ENCODE measurements at regions of chr17 and their contacts with region 1.

Region 1: GRCh38 chr17:28812091-28812747 is 30.4 kb downstream of the FAM222B start:
- DNase-seq: peak; percentile 98
- ATAC-seq: peak; percentile 100
- H3K4me3 Mint-ChIP-seq: peak overlapping the region; percentile 90
- H3K27ac Mint-ChIP-seq: peak overlapping the region; percentile 91
- H3K4me1 Mint-ChIP-seq: peaks cover 43% of the 10 kb centered on the region
- H3K27me3 Mint-ChIP-seq: no peaks in the 10 kb centered on the region
- CTCF ChIP-seq: no peak

Region 2: DNA sequence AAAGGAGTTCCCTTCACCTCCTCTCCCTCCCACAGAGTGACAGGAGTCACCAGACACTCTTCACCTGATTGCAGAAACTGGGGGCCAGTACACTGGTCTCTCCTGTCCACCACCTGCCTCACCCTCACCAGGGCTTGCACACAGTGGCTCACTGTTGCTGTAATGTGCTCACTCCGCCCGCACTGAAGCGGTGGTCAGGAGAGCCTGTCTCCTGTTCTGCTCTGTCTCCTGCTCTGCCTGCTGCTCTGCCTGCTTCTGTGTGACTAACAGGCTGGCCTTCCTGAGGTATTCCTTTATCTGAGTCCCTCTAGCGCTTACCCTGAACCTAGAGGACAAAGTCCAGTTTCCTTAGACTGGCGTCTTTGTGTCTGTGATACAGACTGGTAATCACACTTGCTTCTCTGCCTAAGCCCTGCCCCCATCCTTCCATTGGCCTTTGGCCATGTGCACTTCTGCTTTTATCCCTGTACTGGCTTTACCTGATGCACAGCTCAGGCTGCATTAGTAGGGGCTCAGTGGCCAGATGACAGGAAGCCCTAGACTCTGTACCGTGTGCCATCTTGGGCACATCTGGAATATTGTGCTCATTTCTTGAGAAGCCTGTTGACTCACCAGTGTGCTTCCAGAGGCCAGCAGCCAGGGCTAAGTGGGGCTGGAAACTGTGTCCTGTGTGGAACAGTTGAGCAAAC is 113.8 kb before region 1 on chr17:
- CTCF ChIA-PET with region 1: no interaction called
- POLR2A ChIA-PET with region 1: no interaction called
- intact Hi-C with region 1: no loop called
- DNase-seq: no peak
- ATAC-seq: no peak
- H3K4me3 Mint-ChIP-seq: no peak overlapping the region
- H3K27ac Mint-ChIP-seq: no peak overlapping the region
- H3K4me1 Mint-ChIP-seq: no peaks in the 10 kb centered on the region
- H3K27me3 Mint-ChIP-seq: no peaks in the 10 kb centered on the region
- CTCF ChIP-seq: no peak

Region 3: GRCh38 chr17:28750178-28751047 is 61.8 kb before region 1 on chr17:
- CTCF ChIA-PET with region 1: interaction called, 22 read pairs
- POLR2A ChIA-PET with region 1: no interaction called
- intact Hi-C with region 1: no loop called
- DNase-seq: peak; percentile 98
- ATAC-seq: peak; percentile 93
- H3K4me3 Mint-ChIP-seq: no peak overlapping the region
- H3K27ac Mint-ChIP-seq: peak overlapping the region; percentile 38
- H3K4me1 Mint-ChIP-seq: peaks cover 46% of the 10 kb centered on the region
- H3K27me3 Mint-ChIP-seq: no peaks in the 10 kb centered on the region
- CTCF ChIP-seq: peak; percentile 100

Region 4: GRCh38 chr17:28777178-28777577 is 35.0 kb before region 1 on chr17:
- CTCF ChIA-PET with region 1: no interaction called
- POLR2A ChIA-PET with region 1: no interaction called
- intact Hi-C with region 1: loop called (anchors 5 kb)
- DNase-seq: no peak
- ATAC-seq: no peak
- H3K4me3 Mint-ChIP-seq: no peak overlapping the region
- H3K27ac Mint-ChIP-seq: peak overlapping the region; percentile 23
- H3K4me1 Mint-ChIP-seq: peaks cover 39% of the 10 kb centered on the region
- H3K27me3 Mint-ChIP-seq: no peaks in the 10 kb centered on the region
- CTCF ChIP-seq: no peak

Region 5: DNA sequence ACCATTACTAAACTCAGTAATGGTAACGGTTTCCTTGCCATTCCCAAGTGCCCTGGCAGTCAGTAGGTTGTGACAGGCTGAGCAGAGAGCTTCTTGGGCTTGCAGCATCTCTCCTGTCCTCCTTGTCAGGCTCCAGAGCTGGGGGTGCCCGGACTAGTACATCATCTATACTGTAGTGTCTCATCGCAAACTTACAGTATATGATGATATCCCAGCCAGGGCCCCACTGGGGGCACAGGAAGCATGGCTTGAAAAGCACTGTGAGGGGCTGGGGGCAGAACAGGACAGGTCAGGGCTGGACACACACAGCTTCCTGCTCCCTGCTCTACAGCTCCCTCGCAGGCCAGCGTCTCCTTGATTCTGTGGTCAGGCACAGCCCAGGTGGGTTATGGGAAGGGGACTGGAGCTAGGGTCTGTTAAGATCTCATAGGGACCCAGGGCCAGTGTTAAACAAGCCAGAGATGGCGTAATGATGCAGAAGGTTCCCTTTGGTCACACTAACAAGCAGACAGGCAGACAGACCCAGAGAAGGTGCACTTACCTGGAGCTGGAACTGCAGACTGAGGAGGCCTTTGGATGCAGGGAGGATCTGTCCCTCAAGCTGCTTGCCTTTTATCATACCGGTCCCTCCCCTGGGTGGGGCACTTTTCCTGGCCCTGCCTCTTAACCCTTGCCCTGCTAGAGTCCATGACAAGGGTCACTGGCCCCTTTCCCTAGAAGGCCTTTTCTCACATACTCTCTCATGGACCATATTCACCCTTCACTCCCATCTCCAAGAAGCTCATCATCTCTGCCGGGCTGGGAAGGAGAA is 49.4 kb after region 1 on chr17:
- CTCF ChIA-PET with region 1: no interaction called
- POLR2A ChIA-PET with region 1: no interaction called
- intact Hi-C with region 1: no loop called
- DNase-seq: no peak
- ATAC-seq: no peak
- H3K4me3 Mint-ChIP-seq: no peak overlapping the region
- H3K27ac Mint-ChIP-seq: no peak overlapping the region
- H3K4me1 Mint-ChIP-seq: peaks cover 15% of the 10 kb centered on the region
- H3K27me3 Mint-ChIP-seq: no peaks in the 10 kb centered on the region
- CTCF ChIP-seq: no peak

Region 6: GRCh38 chr17:28878981-28879380 is 66.8 kb after region 1 on chr17:
- CTCF ChIA-PET with region 1: no interaction called
- POLR2A ChIA-PET with region 1: no interaction called
- intact Hi-C with region 1: loop called (anchors 10 kb)
- DNase-seq: peak; percentile 55
- ATAC-seq: peak; percentile 57
- H3K4me3 Mint-ChIP-seq: no peak overlapping the region
- H3K27ac Mint-ChIP-seq: peak overlapping the region; percentile 7
- H3K4me1 Mint-ChIP-seq: peaks cover 29% of the 10 kb centered on the region
- H3K27me3 Mint-ChIP-seq: no peaks in the 10 kb centered on the region
- CTCF ChIP-seq: no peak

Region 7: GRCh38 chr17:29293890-29294579 is 481.8 kb after region 1 on chr17 and contains the start of gene NUFIP2:
- CTCF ChIA-PET with region 1: no interaction called
- POLR2A ChIA-PET with region 1: no interaction called
- intact Hi-C with region 1: loop called (anchors 10 kb)
- DNase-seq: peak; percentile 99
- ATAC-seq: peak; percentile 91
- H3K4me3 Mint-ChIP-seq: peak within 1 kb of the TSS; percentile 100
- H3K27ac Mint-ChIP-seq: peak within 1 kb of the TSS; percentile 100
- H3K4me1 Mint-ChIP-seq: peaks cover 28% of the 10 kb centered on the region
- H3K27me3 Mint-ChIP-seq: no peaks in the 10 kb centered on the region
- CTCF ChIP-seq: no peak
- total RNA-seq, gene NUFIP2: 49.5 to 56.4 TPM